CD8-positive, alpha-beta memory T cell (primary cell): ENCODE measurements at regions of chr10 and their contacts with region 1.

Region 1: GRCh38 chr10:101301249-101301711 is 52.7 kb upstream of the BTRC start:
- DNase-seq: no peak
- H3K4me3 ChIP-seq: no peak overlapping the region
- H3K4me3 Mint-ChIP-seq: no peak overlapping the region
- H3K27ac ChIP-seq: no peak overlapping the region
- H3K27ac Mint-ChIP-seq: no peak overlapping the region
- H3K4me1 ChIP-seq: no peaks in the 10 kb centered on the region
- H3K4me1 Mint-ChIP-seq: peaks cover 0 to 4% (median 3%) of the 10 kb centered on the region in 3 donors
- H3K27me3 ChIP-seq: no peaks in the 10 kb centered on the region
- H3K27me3 Mint-ChIP-seq: peaks cover 34 to 61% of the 10 kb centered on the region in 2 donors

Region 2: DNA sequence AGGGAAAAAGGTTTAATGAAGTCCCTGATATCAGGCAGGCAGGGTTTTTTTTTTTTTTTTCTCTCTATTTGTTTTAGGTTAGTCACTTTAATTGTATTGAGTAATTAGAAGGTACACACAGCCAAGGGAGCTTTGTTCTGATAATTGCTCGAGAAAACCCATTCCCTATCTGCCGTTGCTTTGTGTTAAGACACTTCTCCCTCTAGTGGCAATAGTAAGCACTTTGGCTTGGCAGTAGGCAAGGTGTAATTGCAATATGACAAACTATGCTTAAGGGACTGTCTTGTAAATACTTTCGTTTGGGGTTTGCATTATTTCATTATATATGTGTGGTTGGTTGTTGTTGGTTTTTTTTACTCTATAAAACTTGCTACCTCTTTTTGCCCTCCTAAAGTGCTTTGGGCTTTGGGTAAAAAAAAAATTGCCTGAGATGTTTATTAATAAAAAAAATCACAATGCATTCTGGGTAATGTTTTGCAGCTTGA is 166.0 kb after region 1 on chr10:
- CTCF ChIA-PET with region 1: interaction called, 11 read pairs
- POLR2A ChIA-PET with region 1: no interaction called
- DNase-seq: peak in 3 of 5 donors; percentile 38 to 49 (median 41)
- H3K4me3 ChIP-seq: no peak overlapping the region
- H3K4me3 Mint-ChIP-seq: peak overlapping the region in 1 of 7 donors; percentile 37
- H3K27ac ChIP-seq: no peak overlapping the region
- H3K27ac Mint-ChIP-seq: no peak overlapping the region
- H3K4me1 ChIP-seq: peaks cover 6% of the 10 kb centered on the region
- H3K4me1 Mint-ChIP-seq: peaks cover 6 to 9% (median 8%) of the 10 kb centered on the region in 3 donors
- H3K27me3 ChIP-seq: no peaks in the 10 kb centered on the region
- H3K27me3 Mint-ChIP-seq: no peaks in the 10 kb centered on the region